Naive thymus-derived CD4-positive, alpha-beta T cell (primary cell): ENCODE measurements at regions of chr22 and their contacts with region 1.

Region 1: GRCh38 chr22:43142880-43143562 is at the start of gene MCAT:
- DNase-seq: peak; percentile 71 to 92 (median 75)
- ATAC-seq: peak; percentile 90
- H3K4me3 ChIP-seq: peak within 1 kb of the TSS; percentile 79
- H3K4me3 Mint-ChIP-seq: peak within 1 kb of the TSS; percentile 82 to 92 (median 88)
- H3K27ac ChIP-seq: peak within 1 kb of the TSS; percentile 78
- H3K27ac Mint-ChIP-seq: peak within 1 kb of the TSS; percentile 85 to 97 (median 93)
- H3K4me1 ChIP-seq: peaks cover 6 to 7% of the 10 kb centered on the region in 2 donors
- H3K4me1 Mint-ChIP-seq: peaks cover 21 to 53% (median 33%) of the 10 kb centered on the region in 7 donors
- H3K27me3 ChIP-seq: no peaks in the 10 kb centered on the region
- H3K27me3 Mint-ChIP-seq: no peaks in the 10 kb centered on the region
- total RNA-seq, gene MCAT: 7.1 to 17.9 (median 10.5) TPM

Region 2: GRCh38 chr22:43088979-43089717 is 53.9 kb before region 1 on chr22 and contains the start of gene TTLL1:
- CTCF ChIA-PET with region 1: interaction called, 3 read pairs
- POLR2A ChIA-PET with region 1: no interaction called
- intact Hi-C with region 1: loop called in 1 of 2 experiments (anchors 2 kb)
- DNase-seq: peak; percentile 79 to 90 (median 87)
- ATAC-seq: peak; percentile 93
- H3K4me3 ChIP-seq: peak within 1 kb of the TSS; percentile 49
- H3K4me3 Mint-ChIP-seq: peak within 1 kb of the TSS; percentile 77 to 98 (median 92)
- H3K27ac ChIP-seq: peak within 1 kb of the TSS; percentile 60
- H3K27ac Mint-ChIP-seq: peak within 1 kb of the TSS; percentile 49 to 96 (median 82)
- H3K4me1 ChIP-seq: peaks cover 8 to 13% of the 10 kb centered on the region in 2 donors
- H3K4me1 Mint-ChIP-seq: peaks cover 0 to 19% (median 17%) of the 10 kb centered on the region in 7 donors
- H3K27me3 ChIP-seq: no peaks in the 10 kb centered on the region
- H3K27me3 Mint-ChIP-seq: no peaks in the 10 kb centered on the region
- total RNA-seq, gene TTLL1: 4.6 to 7.7 (median 6.9) TPM

Region 3: GRCh38 chr22:43159484-43160178 is 16.6 kb after region 1 on chr22:
- CTCF ChIA-PET with region 1: no interaction called
- POLR2A ChIA-PET with region 1: no interaction called
- intact Hi-C with region 1: no loop called
- DNase-seq: no peak
- ATAC-seq: no peak
- H3K4me3 ChIP-seq: no peak overlapping the region
- H3K4me3 Mint-ChIP-seq: no peak overlapping the region
- H3K27ac ChIP-seq: no peak overlapping the region
- H3K27ac Mint-ChIP-seq: no peak overlapping the region
- H3K4me1 ChIP-seq: no peaks in the 10 kb centered on the region
- H3K4me1 Mint-ChIP-seq: peaks cover 0 to 24% (median 13%) of the 10 kb centered on the region in 7 donors
- H3K27me3 ChIP-seq: no peaks in the 10 kb centered on the region
- H3K27me3 Mint-ChIP-seq: no peaks in the 10 kb centered on the region